ENCODE measurements at regions of chr3 and their contacts with region 1.

Region 1: GRCh38 chr3:47370887-47371697 is 9.7 kb upstream of the PTPN23 start:
- DNase-seq: peak; percentile 69
- ATAC-seq: peak; percentile 55
- H3K4me3 Mint-ChIP-seq: no peak overlapping the region
- H3K27ac Mint-ChIP-seq: no peak overlapping the region
- H3K4me1 Mint-ChIP-seq: no peaks in the 10 kb centered on the region
- H3K27me3 Mint-ChIP-seq: peaks cover 2% of the 10 kb centered on the region

Region 2: GRCh38 chr3:47009225-47010110 is 361.6 kb before region 1 on chr3:
- CTCF ChIA-PET with region 1: no interaction called
- POLR2A ChIA-PET with region 1: no interaction called
- intact Hi-C with region 1: loop called in 1 of 2 experiments (anchors 10 kb)
- DNase-seq: peak; percentile 84
- ATAC-seq: peak; percentile 93
- H3K4me3 Mint-ChIP-seq: peak overlapping the region; percentile 57
- H3K27ac Mint-ChIP-seq: peak overlapping the region; percentile 58
- H3K4me1 Mint-ChIP-seq: peaks cover 4% of the 10 kb centered on the region
- H3K27me3 Mint-ChIP-seq: no peaks in the 10 kb centered on the region

Region 3: DNA sequence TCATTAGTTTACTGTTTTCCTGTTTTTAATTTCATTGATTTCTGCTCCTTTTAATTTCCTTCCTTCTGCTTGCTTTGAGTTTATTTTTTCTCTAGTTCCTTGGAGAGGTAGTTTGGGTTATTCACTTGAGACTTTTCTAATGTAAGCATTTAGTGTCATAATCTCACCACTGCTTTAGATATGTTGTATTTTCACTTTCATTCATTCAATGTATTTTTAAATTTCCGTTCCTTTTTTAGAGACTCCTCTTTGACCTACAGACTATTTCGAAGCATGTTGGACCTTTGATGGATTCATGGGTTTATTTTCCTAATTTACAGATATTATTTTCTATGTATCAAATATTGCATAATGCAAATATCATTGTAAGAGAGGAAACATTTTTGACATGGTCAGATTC is 65.1 kb before region 1 on chr3:
- CTCF ChIA-PET with region 1: no interaction called
- POLR2A ChIA-PET with region 1: no interaction called
- intact Hi-C with region 1: no loop called
- DNase-seq: no peak
- ATAC-seq: no peak
- H3K4me3 Mint-ChIP-seq: no peak overlapping the region
- H3K27ac Mint-ChIP-seq: no peak overlapping the region
- H3K4me1 Mint-ChIP-seq: peaks cover 20% of the 10 kb centered on the region
- H3K27me3 Mint-ChIP-seq: no peaks in the 10 kb centered on the region

Measured in activated CD4-positive, alpha-beta T cell treated with anti-CD3 and anti-CD28 coated beads for 36 hours (primary cell).